Heart right ventricle (tissue), 16 donors: ENCODE measurements at regions of chr13 and their contacts with region 1.

Region 1: DNA sequence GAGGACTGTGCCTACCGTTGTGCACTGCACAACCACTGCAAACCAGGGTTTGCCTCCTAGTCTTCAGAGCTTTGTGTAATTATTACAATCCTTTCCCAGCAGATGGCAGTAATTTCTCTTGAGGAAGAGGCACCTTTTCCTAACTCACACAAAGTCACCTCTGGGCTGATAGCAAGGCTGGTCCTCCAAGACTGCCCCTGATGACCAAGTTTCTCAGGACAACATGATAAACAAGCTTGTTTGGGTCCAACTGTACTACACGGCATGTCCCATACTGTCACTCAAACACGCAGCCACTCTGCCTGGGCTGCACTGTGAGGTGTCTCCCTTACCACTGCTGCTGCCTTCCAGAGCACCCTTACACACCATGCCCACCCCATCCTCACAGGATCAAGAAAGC is 39.3 kb downstream of the RFXAP start:
- DNase-seq: no peak
- ATAC-seq: peak; percentile 37 to 76 (median 65)
- H3K4me3 ChIP-seq: no peak overlapping the region
- H3K27ac ChIP-seq: no peak overlapping the region
- H3K4me1 ChIP-seq: peaks cover 0 to 19% (median 0%) of the 10 kb centered on the region in 9 donors
- H3K27me3 ChIP-seq: no peaks in the 10 kb centered on the region
- CTCF ChIP-seq: peak; percentile 14 to 64 (median 57)

Region 2: GRCh38 chr13:36752673-36753072 is 105.6 kb before region 1 on chr13:
- intact Hi-C with region 1: no loop called
- DNase-seq: no peak
- ATAC-seq: no peak
- H3K4me3 ChIP-seq: no peak overlapping the region
- H3K27ac ChIP-seq: no peak overlapping the region
- H3K4me1 ChIP-seq: no peaks in the 10 kb centered on the region
- H3K27me3 ChIP-seq: peaks cover 0 to 5% (median 0%) of the 10 kb centered on the region in 7 donors
- CTCF ChIP-seq: no peak

Region 3: GRCh38 chr13:36912973-36913372 is 54.7 kb after region 1 on chr13:
- intact Hi-C with region 1: loop called in 1 of 10 experiments (anchors 5 kb)
- DNase-seq: no peak
- ATAC-seq: no peak
- H3K4me3 ChIP-seq: no peak overlapping the region
- H3K27ac ChIP-seq: no peak overlapping the region
- H3K4me1 ChIP-seq: peaks cover 0 to 23% (median 3%) of the 10 kb centered on the region in 9 donors
- H3K27me3 ChIP-seq: peaks cover 0 to 24% (median 0%) of the 10 kb centered on the region in 7 donors
- CTCF ChIP-seq: no peak

Region 4: DNA sequence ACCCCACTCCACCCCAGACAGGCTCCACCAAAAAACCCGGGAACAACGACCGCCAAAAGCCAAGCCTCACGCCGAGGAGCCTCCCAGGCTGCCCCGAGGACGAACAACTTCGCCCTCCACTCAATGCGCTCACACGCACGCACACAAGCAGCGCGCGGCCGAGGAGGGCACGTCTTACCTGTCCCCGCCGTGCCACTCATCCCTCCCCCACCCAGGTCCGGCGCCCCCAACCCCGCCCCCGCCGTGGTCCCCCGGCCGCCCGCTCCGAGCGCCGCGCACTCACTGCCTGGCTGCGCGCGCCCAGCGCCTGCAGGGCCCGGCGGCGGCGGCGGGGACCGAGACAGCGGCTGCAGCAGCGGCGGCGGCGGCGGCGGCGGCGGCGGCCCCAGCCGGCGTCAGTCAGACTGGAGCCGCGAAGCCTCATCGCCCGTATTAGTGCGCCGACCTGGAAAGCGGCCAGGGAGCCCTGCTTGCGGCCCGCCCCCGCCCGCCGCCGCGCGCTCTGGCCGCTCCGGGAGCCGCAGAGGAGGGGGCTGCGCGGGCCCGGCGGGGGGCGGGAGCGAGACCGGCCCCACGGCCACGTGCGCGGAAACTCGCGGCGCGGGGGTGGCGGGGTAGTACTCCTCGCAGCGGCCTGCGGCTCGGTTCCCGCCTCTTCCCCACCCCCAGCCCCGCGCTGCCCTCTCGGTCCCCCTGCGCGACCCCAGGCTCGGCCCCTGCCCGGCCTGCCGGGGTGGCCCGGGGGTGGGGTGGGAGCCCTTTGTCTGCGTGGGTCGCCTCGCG is 61.7 kb after region 1 on chr13 and contains the start of gene SMAD9:
- intact Hi-C with region 1: loop called in 2 of 10 experiments (anchors 5 to 10 kb)
- DNase-seq: peak; percentile 76 to 82
- ATAC-seq: peak; percentile 57 to 87 (median 74)
- H3K4me3 ChIP-seq: peak within 1 kb of the TSS; percentile 46 to 77 (median 70)
- H3K27ac ChIP-seq: peak within 1 kb of the TSS; percentile 38 to 80 (median 66)
- H3K4me1 ChIP-seq: peaks cover 0 to 21% (median 9%) of the 10 kb centered on the region in 9 donors
- H3K27me3 ChIP-seq: peaks cover 0 to 54% (median 0%) of the 10 kb centered on the region in 7 donors
- CTCF ChIP-seq: no peak
- total RNA-seq, gene SMAD9: 2.4 to 7.8 (median 3.5) TPM

Region 5: DNA sequence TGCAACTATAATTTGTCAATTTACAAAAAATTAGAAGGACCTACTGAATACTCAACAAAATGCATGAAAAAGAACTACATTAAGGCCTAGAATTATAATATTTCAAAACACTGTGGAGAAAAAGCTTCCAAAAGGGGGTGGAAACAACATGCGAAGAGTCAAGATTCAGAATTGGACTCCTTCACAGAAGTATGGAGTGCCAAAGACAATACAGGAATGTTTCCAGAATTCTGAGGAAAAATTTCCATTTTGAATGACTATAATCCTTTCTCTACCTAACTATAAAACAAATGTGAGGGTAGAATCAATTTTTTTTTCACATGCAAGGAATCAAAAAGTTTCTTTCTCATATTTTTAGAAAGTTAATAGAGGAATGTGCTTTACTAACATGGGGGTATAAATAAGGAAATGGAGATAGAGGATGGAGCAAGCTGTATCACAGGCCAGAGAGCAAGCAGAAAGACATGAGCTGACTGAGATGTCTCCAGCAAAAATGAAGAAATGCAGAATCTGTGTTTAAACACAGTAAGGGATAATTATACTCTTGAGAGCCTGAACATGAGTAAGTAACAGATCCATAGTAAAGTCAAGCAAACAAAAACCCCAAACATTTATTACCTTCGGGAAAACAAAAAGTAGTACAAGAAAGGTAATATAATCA is 101.3 kb after region 1 on chr13:
- intact Hi-C with region 1: loop called in 1 of 10 experiments (anchors 10 kb)
- DNase-seq: no peak
- ATAC-seq: peak in 1 of 8 donors; percentile 47
- H3K4me3 ChIP-seq: no peak overlapping the region
- H3K27ac ChIP-seq: peak overlapping the region in 1 of 10 donors; percentile 11
- H3K4me1 ChIP-seq: no peaks in the 10 kb centered on the region
- H3K27me3 ChIP-seq: no peaks in the 10 kb centered on the region
- CTCF ChIP-seq: no peak

Region 6: DNA sequence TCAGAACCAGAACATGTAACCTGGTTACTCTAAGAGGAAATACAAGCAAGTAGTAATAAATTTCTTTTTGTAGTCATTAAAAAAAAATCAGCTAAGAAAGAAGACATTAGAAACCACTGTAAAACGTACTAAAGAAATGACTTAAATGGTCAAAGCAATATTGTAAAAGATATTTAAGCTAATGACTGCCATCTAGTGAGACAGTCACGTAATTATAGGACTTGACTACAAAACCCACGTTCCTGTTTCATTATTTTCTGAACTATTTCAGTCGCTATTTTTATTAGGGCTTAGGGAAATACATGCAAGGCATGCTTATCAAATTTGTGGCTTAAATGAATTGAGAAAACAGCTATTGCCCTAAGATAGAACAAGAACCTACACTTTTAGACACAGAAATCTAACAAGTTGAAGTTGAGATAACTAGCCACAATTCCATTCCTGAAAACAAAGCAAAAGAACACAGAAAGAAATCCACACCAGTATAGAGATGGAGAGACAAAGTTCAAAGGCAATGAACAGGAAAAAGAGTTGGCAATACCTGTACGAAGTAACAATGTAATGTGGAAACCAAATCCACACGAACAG is 123.0 kb after region 1 on chr13:
- intact Hi-C with region 1: loop called in 9 of 10 experiments (anchors 2 to 10 kb)
- DNase-seq: no peak
- ATAC-seq: no peak
- H3K4me3 ChIP-seq: no peak overlapping the region
- H3K27ac ChIP-seq: no peak overlapping the region
- H3K4me1 ChIP-seq: no peaks in the 10 kb centered on the region
- H3K27me3 ChIP-seq: no peaks in the 10 kb centered on the region
- CTCF ChIP-seq: peak in 8 of 9 donors; percentile 13 to 68 (median 60)